ENCODE measurements at regions of chrX and their contacts with region 1.

Region 1: DNA sequence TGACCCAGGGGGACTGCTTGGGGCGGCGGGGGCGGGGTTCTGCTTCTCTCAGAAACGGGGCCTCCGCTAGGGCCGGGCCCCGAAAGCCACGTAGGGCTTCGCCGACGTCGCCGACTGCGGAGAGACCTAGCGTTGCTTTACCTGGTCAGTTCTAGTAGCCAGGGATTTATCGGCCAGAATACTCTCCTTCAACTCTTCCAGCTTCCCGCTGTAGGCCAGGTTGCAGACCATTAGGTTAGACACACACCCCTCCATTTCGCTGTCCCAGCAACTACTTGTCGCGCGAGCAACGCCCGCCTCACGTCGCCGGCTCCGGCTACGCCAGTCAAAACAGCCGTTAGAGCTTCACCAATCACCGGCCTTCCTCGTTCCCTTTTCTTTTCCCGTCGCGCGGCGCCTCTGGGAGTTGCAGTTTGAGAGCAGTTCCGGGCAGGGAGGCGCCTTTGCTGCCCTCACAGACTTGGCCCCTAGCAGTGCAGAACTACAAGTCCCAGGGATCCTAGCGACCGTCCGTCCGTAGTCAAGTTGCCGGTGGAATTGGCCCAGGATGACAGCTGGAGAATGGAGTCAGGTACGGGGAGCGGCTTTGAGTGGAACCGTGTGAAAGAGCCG is at the starts of genes ATG4A and PSMD10:
- DNase-seq: peak; percentile 96
- H3K4me3 Mint-ChIP-seq: no peak within 1 kb of the TSS
- H3K27ac Mint-ChIP-seq: no peak within 1 kb of the TSS
- H3K4me1 Mint-ChIP-seq: peaks cover 6% of the 10 kb centered on the region
- H3K27me3 Mint-ChIP-seq: no peaks in the 10 kb centered on the region
- total RNA-seq, gene ATG4A: 7.8 and 9.4 TPM in 2 replicates
- total RNA-seq, gene PSMD10: 45.2 and 54.8 TPM in 2 replicates

Region 2: DNA sequence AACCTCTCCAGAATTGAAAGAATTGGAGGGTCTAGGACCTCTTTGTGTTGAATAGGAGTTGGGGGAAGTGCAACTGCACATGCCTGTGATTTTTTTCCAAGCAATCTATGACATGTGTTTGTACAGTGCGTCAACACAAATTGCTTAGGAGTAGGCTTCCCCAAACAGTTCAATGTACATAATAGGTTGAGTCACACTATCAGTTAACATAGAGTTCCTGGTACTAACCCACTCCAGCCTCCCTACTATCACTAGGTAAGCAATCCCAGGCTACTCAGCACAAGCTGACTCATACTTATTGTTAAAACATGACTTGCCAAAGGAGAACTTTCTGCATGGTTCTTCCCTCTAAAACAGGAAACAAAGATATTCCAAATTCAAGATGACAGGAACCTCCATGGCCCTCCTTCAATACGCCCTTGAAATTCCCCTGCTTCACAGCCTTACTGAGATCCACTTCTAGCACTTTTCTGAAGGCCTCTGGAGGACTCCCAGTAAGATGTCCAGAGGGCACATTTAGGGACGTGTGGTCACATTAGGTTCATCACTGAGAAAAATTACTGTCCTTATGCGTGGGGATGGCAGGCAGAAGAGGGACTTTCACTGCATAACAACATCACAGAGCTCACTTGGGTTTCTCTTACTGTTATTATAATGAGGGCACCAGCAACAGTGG is 54.9 kb before region 1 on chrX:
- intact Hi-C with region 1: no loop called
- DNase-seq: no peak
- H3K4me3 Mint-ChIP-seq: no peak overlapping the region
- H3K27ac Mint-ChIP-seq: no peak overlapping the region
- H3K4me1 Mint-ChIP-seq: no peaks in the 10 kb centered on the region
- H3K27me3 Mint-ChIP-seq: no peaks in the 10 kb centered on the region

Region 3: DNA sequence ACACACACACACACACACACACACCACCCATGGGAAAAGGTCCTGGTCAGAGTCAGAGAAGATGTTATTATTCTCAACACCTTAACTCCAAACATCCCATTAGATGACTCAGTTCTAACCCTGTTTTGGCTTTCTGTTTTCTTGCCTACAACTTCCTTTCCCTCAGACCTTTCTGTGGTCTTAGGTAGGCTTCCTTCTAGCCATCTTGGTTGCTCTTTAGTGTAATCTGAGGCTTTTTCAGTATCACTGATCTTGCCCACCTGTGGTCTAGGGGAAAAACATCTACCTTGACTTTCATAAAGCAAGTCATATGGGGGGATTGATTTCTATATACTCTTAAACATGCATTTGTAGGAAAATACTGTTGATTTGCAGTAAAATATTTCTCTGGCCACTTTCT is 57.2 kb after region 1 on chrX:
- intact Hi-C with region 1: loop called (anchors 1 kb)
- DNase-seq: peak; percentile 53
- H3K4me3 Mint-ChIP-seq: no peak overlapping the region
- H3K27ac Mint-ChIP-seq: peak overlapping the region; percentile 21
- H3K4me1 Mint-ChIP-seq: peaks cover 8% of the 10 kb centered on the region
- H3K27me3 Mint-ChIP-seq: no peaks in the 10 kb centered on the region

Measured in activated CD4-positive, alpha-beta T cell treated with anti-CD3 and anti-CD28 coated beads, Interleukin-2, amount 10 ng/mL, durations not matched to agents 24 days and 14 days (primary cell).